ENCODE measurements at regions of chr3 and their contacts with region 1.

Region 1: DNA sequence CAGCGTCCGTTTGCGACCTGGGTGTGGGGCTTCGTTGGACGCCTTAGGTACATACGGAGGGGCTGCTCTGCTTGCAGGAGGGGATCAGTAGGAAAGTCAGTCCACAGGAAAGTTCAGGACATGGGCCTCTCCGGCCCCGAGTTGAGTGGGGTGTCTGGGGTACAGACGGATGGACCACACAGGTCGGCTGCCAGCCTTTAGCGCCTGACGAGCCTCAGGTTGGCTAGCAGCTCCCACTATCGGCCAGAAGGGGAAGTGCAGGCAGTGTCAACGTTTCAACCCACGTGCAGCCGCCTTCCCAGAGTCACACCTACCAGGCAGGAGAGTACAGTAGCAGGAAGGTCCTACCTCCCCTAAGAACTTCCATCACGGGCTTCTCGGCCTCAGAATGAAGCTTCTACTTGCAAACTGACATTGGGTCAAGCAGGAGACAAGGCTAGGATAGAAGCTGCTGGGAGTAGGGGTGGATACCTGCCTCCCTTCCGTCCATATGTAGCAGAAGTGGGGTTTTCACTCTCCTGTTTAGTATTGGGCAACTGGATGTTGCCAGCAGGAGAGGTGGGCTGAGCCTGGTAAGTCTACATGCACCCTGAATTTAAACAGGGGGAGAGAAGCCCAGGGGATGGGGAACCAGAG is 1.8 kb upstream of the SCN5A start:
- DNase-seq: peak; percentile 81
- H3K4me3 Mint-ChIP-seq: peak overlapping the region; percentile 27
- H3K27ac Mint-ChIP-seq: no peak overlapping the region
- H3K4me1 Mint-ChIP-seq: peaks cover 10% of the 10 kb centered on the region
- H3K27me3 Mint-ChIP-seq: peaks cover 14% of the 10 kb centered on the region

Region 2: GRCh38 chr3:37967260-37967881 is 683.9 kb before region 1 on chr3:
- CTCF ChIA-PET with region 1: no interaction called
- intact Hi-C with region 1: no loop called
- DNase-seq: peak; percentile 81
- H3K4me3 Mint-ChIP-seq: no peak overlapping the region
- H3K27ac Mint-ChIP-seq: no peak overlapping the region
- H3K4me1 Mint-ChIP-seq: peaks cover 4% of the 10 kb centered on the region
- H3K27me3 Mint-ChIP-seq: no peaks in the 10 kb centered on the region

Region 3: DNA sequence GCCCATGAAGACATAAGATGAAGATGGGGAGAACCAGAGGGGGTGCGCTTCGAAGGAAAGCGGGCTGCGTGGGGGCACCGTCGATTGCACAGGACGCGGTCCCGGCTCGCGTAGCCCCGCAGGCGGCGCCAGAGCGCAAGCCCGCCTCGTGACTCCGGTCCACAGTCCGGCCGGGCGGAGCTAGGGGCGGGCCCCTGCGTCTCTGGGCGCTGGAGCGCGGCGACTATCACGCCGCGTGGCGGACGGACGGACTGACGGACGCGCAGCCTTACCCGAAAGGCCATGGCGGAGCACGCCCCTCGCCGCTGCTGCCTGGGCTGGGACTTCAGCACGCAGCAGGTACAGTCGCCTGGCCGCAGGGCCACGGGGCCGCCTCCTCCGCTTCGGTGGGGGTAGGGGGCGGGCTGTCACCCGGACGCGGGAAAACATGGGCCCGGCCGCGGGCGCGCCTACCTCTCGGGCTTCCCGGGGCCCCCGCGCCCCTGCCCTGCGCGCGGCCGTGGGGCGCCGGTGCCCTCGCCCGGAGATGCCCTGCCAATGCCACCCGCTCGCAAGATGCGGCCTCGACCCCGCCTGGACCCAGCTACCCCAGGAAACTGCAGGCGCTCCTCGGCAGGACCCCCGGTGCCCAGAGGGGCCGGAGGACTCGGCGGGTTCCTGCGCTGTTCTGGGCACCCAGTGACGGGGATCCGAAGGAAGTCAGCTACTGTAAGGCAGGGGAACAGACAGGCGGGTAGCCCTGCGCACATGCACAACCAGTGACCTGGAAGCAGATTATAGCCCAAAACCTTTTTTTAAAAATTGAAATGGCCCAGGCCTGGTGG is 304.5 kb before region 1 on chr3 and contains the start of gene XYLB:
- CTCF ChIA-PET with region 1: interaction called, 3 read pairs
- intact Hi-C with region 1: loop called (anchors 2 kb)
- DNase-seq: peak; percentile 79
- H3K4me3 Mint-ChIP-seq: peak within 1 kb of the TSS; percentile 72
- H3K27ac Mint-ChIP-seq: no peak within 1 kb of the TSS
- H3K4me1 Mint-ChIP-seq: peaks cover 4% of the 10 kb centered on the region
- H3K27me3 Mint-ChIP-seq: peaks cover 2% of the 10 kb centered on the region
- total RNA-seq, gene XYLB: 2.5 to 2.8 TPM

Region 4: DNA sequence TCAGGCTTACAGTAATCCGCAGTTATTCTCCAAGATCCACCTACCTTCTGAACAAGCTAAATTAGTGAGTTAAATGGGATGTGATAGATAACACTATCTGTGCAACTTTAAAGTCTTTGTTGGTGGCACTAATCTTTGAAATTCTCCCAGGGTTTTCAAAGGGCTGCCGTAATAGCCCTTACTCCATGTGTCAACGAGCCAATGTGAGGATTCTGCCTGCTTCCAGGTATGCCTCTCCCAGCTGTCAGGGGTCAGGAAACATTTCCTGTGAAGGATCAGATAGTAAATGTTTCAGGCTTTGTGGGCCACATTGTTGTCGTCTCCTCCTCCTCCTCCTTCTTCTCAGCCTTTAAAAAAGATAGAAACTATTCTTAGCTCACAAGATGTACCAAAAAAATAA is 18.4 kb after region 1 on chr3:
- CTCF ChIA-PET with region 1: interaction called, 11 read pairs
- intact Hi-C with region 1: no loop called
- DNase-seq: no peak
- H3K4me3 Mint-ChIP-seq: no peak overlapping the region
- H3K27ac Mint-ChIP-seq: no peak overlapping the region
- H3K4me1 Mint-ChIP-seq: no peaks in the 10 kb centered on the region
- H3K27me3 Mint-ChIP-seq: peaks cover 12% of the 10 kb centered on the region

Region 5: DNA sequence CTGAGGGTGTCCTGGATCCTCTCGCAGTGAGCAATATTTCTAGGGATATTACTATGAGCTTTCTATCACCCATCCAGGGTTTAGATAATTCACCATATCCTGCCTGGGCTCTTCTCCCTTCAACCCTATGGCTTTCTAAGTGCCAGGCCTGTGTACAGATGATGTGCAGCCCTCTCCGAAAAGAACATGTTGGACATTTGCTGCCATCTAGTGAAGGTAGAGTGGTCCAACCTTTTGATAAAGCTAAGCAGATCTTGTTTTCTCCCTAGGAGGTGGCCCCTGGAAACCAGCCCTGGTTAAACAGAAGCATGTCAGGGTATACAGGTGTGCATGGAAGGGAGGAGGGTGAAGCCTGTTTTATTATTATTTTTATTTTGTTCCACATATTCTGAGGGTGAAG is 192.6 kb after region 1 on chr3:
- CTCF ChIA-PET with region 1: no interaction called
- intact Hi-C with region 1: loop called (anchors 2 kb)
- DNase-seq: peak; percentile 21
- H3K4me3 Mint-ChIP-seq: no peak overlapping the region
- H3K27ac Mint-ChIP-seq: no peak overlapping the region
- H3K4me1 Mint-ChIP-seq: no peaks in the 10 kb centered on the region
- H3K27me3 Mint-ChIP-seq: peaks cover 2% of the 10 kb centered on the region

Region 6: DNA sequence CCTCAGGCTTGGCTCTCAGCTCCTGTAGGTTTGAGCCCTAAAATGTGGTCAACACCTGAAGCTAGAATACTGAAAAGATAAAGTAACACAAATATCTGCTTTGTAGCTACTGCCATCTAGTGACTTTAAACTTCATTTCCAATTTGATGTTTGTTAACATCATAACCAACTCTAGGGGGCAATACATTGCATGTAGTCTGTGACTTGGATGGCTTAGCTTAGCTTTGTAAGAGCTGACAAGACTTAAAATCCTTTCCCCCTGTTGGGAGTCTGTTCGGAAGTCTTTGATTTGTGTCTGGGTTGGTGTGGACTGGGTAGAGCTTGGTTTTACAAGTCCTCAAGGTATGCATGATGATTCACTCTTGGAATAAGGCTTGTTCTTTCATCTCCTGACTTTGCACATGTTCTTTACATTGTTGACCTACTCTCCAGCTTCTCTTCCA is 348.8 kb after region 1 on chr3:
- CTCF ChIA-PET with region 1: interaction called, 6 read pairs
- intact Hi-C with region 1: loop called (anchors 2 kb)
- DNase-seq: no peak
- H3K4me3 Mint-ChIP-seq: no peak overlapping the region
- H3K27ac Mint-ChIP-seq: no peak overlapping the region
- H3K4me1 Mint-ChIP-seq: no peaks in the 10 kb centered on the region
- H3K27me3 Mint-ChIP-seq: no peaks in the 10 kb centered on the region

Region 7: DNA sequence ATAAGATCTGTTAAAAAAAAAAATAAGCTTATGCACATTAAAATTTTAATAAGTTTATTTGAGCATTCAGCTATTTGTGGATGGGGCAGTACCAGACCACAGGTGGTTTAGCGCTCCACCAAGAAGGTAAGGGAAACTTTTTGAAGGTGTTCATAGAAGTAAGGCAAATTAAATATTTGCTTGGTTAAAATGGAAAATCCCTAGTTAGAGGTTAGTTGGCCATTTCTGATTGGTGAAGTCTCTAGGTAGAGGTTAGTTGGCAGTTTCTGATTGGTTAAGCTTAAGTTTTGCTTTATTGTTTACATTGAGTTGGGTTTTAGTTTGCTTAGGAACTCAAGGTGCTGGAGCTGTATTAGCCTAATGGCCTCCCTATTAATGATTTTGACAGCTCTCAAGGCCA is 369.8 kb after region 1 on chr3:
- CTCF ChIA-PET with region 1: no interaction called
- intact Hi-C with region 1: no loop called
- DNase-seq: no peak
- H3K4me3 Mint-ChIP-seq: no peak overlapping the region
- H3K27ac Mint-ChIP-seq: no peak overlapping the region
- H3K4me1 Mint-ChIP-seq: no peaks in the 10 kb centered on the region
- H3K27me3 Mint-ChIP-seq: peaks cover 8% of the 10 kb centered on the region

Region 8: DNA sequence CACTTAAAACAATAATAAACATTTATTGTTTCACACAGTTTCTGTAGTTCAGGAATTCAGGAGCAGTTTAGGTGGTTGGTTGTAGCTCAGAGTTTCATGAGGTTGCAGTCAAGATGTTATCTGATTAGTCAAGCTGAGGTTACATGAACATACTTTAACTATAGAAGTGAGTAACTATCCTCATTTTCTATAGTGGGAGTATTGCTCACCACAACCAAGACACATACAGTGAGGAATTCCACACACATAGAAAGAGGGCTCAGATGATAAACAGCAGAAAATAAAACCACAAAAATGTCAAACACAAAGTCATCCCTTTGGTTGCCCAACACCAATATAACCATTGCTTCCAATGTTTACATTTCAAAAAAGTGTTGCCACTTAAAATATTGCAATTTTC is 386.9 kb after region 1 on chr3:
- CTCF ChIA-PET with region 1: no interaction called
- intact Hi-C with region 1: loop called (anchors 5 kb)
- DNase-seq: no peak
- H3K4me3 Mint-ChIP-seq: no peak overlapping the region
- H3K27ac Mint-ChIP-seq: no peak overlapping the region
- H3K4me1 Mint-ChIP-seq: no peaks in the 10 kb centered on the region
- H3K27me3 Mint-ChIP-seq: no peaks in the 10 kb centered on the region